ENCODE measurements at regions of chr5 and their contacts with region 1.

Region 1: DNA sequence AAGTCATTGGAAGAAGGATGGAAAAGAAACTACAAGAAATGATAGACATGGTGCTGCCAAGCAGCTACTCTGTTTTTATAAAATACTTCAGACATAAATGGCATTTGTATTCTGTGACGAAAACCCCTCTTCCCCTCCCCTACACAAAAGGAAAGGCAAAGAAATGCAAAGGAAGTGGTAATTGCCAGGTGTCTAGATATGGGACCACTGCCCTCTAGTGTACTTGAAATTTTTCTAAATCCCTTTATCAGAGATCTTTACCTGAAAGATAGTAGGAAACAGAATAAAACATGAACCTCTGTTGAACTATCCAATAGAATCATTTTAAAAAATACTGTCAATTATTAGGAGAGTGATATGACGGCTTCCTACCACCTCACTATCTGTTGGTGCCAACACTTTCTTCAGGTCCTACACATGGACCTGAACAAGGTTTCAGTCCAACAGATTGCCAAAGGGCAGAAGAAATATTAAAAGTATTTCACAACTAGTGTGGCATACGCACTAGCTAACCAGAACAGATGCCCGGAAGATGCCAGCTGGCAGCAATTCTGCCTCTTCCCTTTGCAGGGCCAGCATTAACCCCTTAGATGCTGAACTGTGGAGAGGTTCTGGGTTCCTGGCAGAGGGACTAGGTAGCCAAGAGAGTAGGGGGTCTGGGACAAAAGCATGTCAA is 104.1 kb downstream of the TSSK1B start:
- DNase-seq: peak; percentile 74
- H3K4me3 Mint-ChIP-seq: no peak overlapping the region
- H3K27ac Mint-ChIP-seq: no peak overlapping the region
- H3K4me1 Mint-ChIP-seq: peaks cover 14% of the 10 kb centered on the region
- H3K27me3 Mint-ChIP-seq: peaks cover 9% of the 10 kb centered on the region

Region 2: DNA sequence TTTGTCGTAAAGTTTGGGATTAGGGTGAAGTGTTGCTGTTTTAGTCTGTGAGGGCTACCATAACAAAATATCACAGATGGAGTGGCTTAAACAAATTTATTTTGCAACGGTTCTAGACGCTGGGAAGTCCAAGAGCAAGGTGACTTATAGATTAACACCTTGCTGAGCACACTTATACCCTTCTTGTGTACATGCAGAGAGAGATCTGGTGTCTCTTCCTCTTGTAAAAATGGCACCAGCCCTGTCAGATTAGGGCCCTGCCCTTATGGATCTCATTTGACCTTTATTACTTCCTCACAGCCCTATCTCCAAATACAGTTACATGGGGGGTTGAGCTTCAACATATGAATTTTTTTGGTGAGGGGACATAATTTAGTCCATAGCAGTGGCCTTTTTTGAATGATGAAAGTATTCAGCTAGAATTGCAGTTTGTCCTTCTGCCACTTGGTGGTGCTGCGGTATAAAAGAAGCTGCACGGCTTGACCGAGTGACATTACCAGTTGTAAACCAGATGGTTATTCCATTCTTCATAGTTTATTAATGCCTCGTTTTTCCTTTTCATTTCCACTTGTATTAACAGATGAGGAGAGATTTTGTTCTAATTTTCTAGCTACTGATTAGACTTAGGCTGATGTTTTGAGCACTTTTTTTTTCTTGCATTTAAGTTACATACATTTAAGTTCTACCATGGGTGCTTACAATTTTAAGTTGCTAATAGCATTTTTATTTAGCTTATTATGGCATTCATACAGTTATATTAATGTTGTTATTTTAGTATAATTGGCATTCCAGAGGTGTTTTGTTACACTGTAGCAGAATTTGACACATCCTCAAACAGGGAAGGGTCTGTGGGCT is 334.7 kb before region 1 on chr5:
- intact Hi-C with region 1: loop called (anchors 1 kb)
- DNase-seq: peak; percentile 94
- H3K4me3 Mint-ChIP-seq: no peak overlapping the region
- H3K27ac Mint-ChIP-seq: no peak overlapping the region
- H3K4me1 Mint-ChIP-seq: peaks cover 9% of the 10 kb centered on the region
- H3K27me3 Mint-ChIP-seq: no peaks in the 10 kb centered on the region

Region 3: DNA sequence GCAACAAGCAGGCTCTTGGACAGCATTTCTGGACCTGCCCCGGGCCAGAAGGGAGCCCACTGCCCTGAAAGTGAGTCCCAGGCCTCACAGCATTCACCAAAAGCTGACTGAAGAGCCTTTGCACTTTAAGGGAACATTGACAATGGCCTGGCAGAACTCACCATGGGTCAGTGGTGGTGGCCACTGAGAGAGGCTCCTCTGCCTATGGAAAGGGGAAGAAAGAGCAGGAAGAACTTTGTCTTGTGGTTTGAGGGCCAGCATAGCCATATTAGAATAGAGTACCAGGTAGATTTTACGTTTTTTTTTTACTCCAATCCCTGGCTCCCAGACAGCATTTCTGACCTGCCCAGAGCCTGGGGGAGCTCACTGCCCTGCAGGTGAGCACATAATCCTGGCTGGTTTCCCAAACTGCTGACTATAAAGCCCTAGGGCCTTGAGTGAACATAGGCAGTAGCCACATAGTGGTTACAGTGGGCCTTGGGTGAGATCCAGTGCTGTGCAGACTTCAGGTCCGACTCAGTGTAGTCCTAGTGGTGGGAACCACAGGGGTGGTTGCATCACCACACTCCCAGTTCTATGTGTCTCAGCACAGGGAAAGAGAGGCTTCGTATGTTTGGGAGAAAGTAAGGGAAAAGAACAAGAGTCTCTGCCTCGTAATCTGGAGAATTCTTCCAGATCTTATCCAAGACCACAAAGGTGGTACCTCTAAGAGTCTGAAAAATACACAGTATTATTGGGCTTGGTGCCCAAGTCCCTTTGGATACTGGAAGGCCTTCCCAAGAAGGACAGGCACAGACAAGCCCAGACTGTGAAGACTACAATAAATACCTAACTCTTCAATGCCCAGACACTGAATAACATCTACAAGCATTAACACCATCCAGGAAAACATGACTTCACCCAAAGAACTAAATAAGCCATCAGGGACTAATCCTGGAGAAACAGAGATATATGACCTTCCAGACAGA is 14.6 kb after region 1 on chr5:
- intact Hi-C with region 1: no loop called
- DNase-seq: no peak
- H3K4me3 Mint-ChIP-seq: no peak overlapping the region
- H3K27ac Mint-ChIP-seq: no peak overlapping the region
- H3K4me1 Mint-ChIP-seq: peaks cover 2% of the 10 kb centered on the region
- H3K27me3 Mint-ChIP-seq: peaks cover 36% of the 10 kb centered on the region

Measured in activated CD4-positive, alpha-beta T cell treated with anti-CD3 and anti-CD28 coated beads, Interleukin-2, amount 10 ng/mL, durations not matched to agents 24 days and 14 days (primary cell).